Activated naive CD4-positive, alpha-beta T cell treated with anti-CD3 and anti-CD28 coated beads for 36 hours (primary cell): ENCODE measurements at regions of chr9 and their contacts with region 1.

Region 1: DNA sequence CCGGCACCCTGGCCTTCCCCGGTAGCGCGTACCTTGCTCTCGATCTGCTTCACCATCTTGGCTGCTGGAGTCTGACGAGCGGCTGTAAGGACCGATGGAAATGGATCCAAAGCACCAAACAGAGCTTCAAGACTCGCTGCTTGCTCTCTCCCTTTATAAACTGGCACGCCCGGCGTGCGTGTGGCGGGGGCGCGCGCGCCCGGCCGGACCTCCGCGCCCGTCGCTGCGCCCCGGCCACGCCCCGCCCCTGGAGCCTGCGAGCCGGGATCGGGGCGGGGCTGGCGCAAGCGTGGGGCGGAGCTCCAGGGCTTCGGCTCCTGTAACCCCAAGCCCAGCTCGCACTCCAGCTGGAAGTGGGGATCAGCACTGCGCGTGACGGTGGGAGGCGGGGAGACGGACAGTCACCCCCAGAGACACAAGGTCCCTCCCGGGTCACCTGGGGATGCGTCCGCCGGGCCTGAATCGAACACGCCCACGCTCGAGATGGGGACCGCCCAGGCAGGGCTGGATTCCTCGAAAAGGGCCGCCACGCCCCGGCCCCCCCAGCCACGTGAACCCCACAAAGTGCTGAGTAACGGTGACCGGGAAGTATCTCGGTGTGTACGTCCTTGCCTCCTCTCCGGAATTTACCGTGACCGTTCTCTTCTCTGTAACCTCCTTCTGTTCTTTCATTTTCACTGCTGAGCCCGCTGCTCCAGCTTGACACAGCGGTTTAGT is at the start of gene TXN:
- DNase-seq: peak; percentile 94
- H3K4me3 Mint-ChIP-seq: peak within 1 kb of the TSS; percentile 91
- H3K27ac Mint-ChIP-seq: peak within 1 kb of the TSS; percentile 96
- H3K4me1 Mint-ChIP-seq: peaks cover 56% of the 10 kb centered on the region
- H3K27me3 Mint-ChIP-seq: no peaks in the 10 kb centered on the region
- total RNA-seq, gene TXN: 460 to 475 TPM

Region 2: GRCh38 chr9:109012876-109013678 is 1243.5 kb before region 1 on chr9 and contains the start of gene CTNNAL1:
- CTCF ChIA-PET with region 1: no interaction called
- intact Hi-C with region 1: loop called (anchors 5 kb)
- DNase-seq: peak; percentile 86
- H3K4me3 Mint-ChIP-seq: peak within 1 kb of the TSS; percentile 95
- H3K27ac Mint-ChIP-seq: peak within 1 kb of the TSS; percentile 68
- H3K4me1 Mint-ChIP-seq: peaks cover 28% of the 10 kb centered on the region
- H3K27me3 Mint-ChIP-seq: no peaks in the 10 kb centered on the region
- total RNA-seq, gene CTNNAL1: 18.4 to 19.0 TPM

Region 3: DNA sequence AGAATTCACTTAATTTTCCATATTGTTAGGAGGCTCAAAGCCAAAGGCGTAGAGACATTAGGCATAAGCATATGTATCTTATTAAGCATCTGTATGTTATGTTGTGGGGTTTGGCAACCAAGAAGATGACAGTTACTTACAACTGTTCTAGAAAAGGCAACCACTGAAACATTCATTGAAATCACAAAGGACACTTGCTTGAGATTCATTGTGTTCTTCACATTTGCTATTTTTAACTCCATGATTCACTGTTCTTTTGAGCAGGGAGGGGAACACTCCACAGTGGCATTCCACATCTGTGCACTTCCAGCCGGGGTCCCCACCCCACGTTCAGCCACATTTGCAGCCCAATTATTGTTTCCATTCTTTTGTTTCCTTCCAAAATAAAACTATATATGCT is 369.5 kb before region 1 on chr9:
- CTCF ChIA-PET with region 1: no interaction called
- intact Hi-C with region 1: loop called (anchors 2 kb)
- DNase-seq: no peak
- H3K4me3 Mint-ChIP-seq: no peak overlapping the region
- H3K27ac Mint-ChIP-seq: peak overlapping the region; percentile 96
- H3K4me1 Mint-ChIP-seq: peaks cover 61% of the 10 kb centered on the region
- H3K27me3 Mint-ChIP-seq: no peaks in the 10 kb centered on the region

Region 4: DNA sequence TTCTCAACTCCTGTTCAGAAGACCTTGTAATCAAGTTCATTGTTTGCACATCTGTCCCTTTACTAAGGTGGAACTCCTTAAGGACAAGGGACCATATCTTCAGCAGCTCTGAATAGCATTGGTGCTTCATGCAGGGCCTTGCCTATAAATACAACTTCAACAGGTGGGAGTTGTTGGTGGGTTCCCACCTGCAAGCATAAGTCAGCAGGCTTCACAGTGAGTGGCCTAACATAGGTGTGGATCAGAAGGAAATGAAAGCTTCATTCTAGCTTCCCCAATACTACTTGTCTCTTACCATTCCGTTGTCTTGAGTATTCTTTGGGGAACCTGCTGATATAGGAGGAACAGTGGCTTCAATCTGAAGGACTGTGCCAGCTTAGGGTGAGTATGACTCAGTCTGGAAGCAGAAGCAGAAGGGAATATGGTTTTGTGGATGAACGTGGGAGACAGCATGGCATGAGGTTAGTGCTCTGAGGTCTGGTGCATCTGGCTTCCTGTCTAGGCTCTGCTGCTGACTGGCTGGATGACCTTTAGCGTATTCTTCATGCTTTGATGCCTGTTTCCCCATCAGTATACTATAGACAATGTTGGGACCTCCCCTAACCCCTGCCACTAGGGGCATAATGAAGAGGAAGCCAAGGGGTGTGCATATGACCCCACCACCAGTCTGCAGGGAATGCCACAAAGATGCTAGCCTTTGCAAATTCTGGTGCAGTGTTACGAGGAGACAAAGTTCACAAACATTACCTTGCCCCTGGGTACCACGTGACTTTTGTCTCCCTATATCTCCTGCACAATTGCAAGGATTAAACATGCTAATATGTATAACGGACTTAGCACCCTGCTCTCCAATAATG is 284.3 kb before region 1 on chr9:
- CTCF ChIA-PET with region 1: no interaction called
- intact Hi-C with region 1: loop called (anchors 1 kb)
- DNase-seq: peak; percentile 56
- H3K4me3 Mint-ChIP-seq: no peak overlapping the region
- H3K27ac Mint-ChIP-seq: peak overlapping the region; percentile 4
- H3K4me1 Mint-ChIP-seq: peaks cover 86% of the 10 kb centered on the region
- H3K27me3 Mint-ChIP-seq: no peaks in the 10 kb centered on the region

Region 5: DNA sequence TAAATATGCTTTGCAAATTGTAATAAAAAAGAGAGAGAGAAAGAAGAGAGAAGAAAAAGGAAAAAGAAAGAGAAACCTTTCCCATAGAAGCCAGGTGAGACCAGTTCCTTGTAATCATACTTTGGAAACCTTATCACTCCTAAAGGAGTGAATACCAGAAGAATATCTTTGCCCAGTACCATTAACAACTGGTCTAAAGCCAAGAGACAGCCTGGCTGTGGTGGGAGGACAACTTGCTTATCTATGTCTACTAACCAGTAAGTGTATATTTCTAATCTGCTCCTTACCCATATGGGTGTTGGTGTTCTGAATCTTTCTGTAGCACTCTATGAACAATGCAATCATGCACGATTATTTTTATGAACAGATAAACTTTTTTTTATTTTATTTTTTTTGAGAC is 10.3 kb after region 1 on chr9:
- CTCF ChIA-PET with region 1: interaction called, 5 read pairs
- intact Hi-C with region 1: loop called (anchors 1 kb)
- DNase-seq: no peak
- H3K4me3 Mint-ChIP-seq: no peak overlapping the region
- H3K27ac Mint-ChIP-seq: no peak overlapping the region
- H3K4me1 Mint-ChIP-seq: no peaks in the 10 kb centered on the region
- H3K27me3 Mint-ChIP-seq: no peaks in the 10 kb centered on the region

Region 6: GRCh38 chr9:111483862-111484571 is 1227.5 kb after region 1 on chr9 and contains the start of gene ECPAS:
- CTCF ChIA-PET with region 1: no interaction called
- intact Hi-C with region 1: loop called (anchors 2 kb)
- DNase-seq: peak; percentile 66
- H3K4me3 Mint-ChIP-seq: peak within 1 kb of the TSS; percentile 78
- H3K27ac Mint-ChIP-seq: peak within 1 kb of the TSS; percentile 83
- H3K4me1 Mint-ChIP-seq: peaks cover 29% of the 10 kb centered on the region
- H3K27me3 Mint-ChIP-seq: peaks cover under 1% of the 10 kb centered on the region
- total RNA-seq, gene ECPAS: 56.8 to 58.1 TPM

Region 7: DNA sequence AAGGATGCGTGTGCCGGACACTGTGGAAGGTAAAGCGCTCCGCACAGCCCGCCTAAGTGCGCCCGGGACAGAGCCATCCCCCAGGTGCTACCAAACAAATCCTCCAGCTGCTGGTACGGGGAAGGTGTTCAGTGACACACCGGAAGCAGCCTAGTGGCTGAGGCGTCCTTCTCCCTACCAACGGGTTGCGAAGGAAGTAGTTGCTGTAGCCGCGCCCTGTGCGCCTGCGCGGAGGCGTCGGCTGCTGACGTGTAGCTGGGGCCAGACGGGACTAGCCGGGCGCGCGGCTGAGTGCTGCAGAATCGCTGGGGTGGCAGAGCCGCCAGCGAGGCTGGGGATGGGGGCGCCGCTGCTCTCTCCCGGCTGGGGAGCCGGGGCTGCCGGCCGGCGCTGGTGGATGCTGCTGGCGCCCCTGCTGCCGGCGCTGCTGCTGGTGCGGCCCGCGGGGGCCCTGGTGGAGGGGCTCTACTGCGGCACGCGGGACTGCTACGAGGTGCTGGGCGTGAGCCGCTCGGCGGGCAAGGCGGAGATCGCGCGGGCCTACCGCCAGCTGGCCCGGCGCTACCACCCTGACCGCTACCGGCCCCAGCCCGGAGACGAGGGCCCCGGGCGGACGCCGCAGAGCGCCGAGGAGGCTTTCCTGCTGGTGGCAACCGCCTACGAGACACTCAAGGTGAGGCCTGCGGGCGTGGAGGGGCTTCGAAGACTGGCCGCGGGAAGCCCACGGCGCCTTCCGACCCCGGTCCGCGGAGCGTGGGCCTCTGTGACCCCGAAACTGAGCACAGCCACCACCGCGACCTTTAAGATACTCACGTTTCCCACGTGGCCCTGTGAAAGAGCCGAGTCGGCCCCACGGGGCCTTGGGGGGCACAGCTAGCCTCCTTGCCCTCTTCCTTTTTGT is 1374.8 kb after region 1 on chr9 and contains the start of gene DNAJC25:
- CTCF ChIA-PET with region 1: no interaction called
- intact Hi-C with region 1: loop called (anchors 5 kb)
- DNase-seq: peak; percentile 97
- H3K4me3 Mint-ChIP-seq: peak within 1 kb of the TSS; percentile 92
- H3K27ac Mint-ChIP-seq: peak within 1 kb of the TSS; percentile 79
- H3K4me1 Mint-ChIP-seq: peaks cover 42% of the 10 kb centered on the region
- H3K27me3 Mint-ChIP-seq: no peaks in the 10 kb centered on the region
- total RNA-seq, gene DNAJC25: 3.4 to 3.9 TPM